Psoas muscle (tissue), 8 donors: ENCODE measurements at regions of chr7 and their contacts with region 1.

Region 1: GRCh38 chr7:138161600-138162081 is 85.4 kb downstream of the AKR1D1 start:
- DNase-seq: peak in 1 of 2 donors; percentile 38
- ATAC-seq: peak in 1 of 4 donors; percentile 46
- H3K4me3 ChIP-seq: no peak overlapping the region
- H3K27ac ChIP-seq: no peak overlapping the region
- H3K4me1 ChIP-seq: no peaks in the 10 kb centered on the region
- H3K27me3 ChIP-seq: peaks cover 0 to under 1% (median 0%) of the 10 kb centered on the region in 3 donors
- CTCF ChIP-seq: peak; percentile 46

Region 2: DNA sequence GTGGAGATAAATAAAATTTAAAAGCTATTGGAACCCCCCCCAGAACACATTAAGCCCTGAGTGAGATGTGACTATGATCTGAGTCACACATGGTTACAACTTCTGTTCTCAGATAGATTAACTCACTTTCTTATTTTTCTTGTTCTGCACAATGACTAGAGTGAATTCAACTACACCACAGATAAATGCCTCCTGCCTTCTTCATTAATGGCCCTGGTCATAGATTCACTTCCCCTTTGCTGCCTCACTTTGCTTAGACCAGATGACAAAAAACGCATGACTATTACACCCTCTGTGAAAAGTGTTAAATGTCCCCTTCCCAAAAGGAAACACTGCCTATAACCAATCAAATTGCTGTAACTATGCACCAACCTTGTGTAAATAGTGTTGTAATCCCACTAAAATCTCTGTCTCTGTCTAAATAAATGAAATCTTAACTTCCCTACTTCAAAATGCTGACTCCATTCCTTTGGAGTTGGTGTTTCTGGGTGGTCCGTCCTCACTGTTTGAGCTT is 36.0 kb before region 1 on chr7:
- intact Hi-C with region 1: no loop called
- DNase-seq: no peak
- ATAC-seq: no peak
- H3K4me3 ChIP-seq: no peak overlapping the region
- H3K27ac ChIP-seq: no peak overlapping the region
- H3K4me1 ChIP-seq: no peaks in the 10 kb centered on the region
- H3K27me3 ChIP-seq: peaks cover 0 to 2% (median 0%) of the 10 kb centered on the region in 3 donors
- CTCF ChIP-seq: no peak

Region 3: GRCh38 chr7:138478499-138478908 is 316.9 kb after region 1 on chr7:
- intact Hi-C with region 1: no loop called
- DNase-seq: no peak
- ATAC-seq: no peak
- H3K4me3 ChIP-seq: no peak overlapping the region
- H3K27ac ChIP-seq: no peak overlapping the region
- H3K4me1 ChIP-seq: peaks cover under 1% of the 10 kb centered on the region
- H3K27me3 ChIP-seq: no peaks in the 10 kb centered on the region
- CTCF ChIP-seq: no peak

Region 4: DNA sequence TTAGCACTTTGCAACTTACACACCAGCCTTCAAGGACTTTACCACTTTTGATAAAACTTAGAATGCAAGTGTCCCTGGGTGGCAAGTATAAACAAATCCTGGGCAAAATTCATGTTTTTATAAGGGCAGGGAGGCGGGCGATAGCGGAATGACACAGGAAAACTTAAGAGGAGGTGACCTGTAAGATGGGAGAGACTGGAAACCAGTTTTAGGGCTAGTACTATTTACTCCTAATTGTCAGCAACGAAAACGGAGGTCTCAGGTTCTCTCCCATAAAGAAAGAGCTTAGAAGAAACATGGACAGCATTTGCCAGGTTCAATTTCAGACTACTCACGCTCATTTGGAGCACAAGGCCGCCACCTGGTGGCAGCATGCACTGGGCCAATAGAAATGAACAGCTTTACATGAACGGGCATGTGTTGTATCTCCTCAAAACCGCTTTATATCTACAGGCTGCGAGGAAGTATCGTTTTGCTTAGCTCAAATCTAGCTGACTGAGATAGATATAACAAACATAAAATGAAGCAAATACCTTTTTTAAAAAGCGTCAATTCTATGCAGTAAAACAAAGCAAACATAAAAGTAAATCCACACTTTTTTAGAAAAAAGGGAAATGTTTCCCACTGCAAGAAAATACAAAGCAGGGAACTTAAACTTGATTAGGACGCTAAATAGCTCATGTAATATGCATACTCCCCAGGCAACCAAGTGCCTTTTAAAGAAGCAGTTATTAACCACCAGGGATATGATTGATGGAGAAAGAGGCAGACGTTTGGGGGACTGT is 577.1 kb after region 1 on chr7:
- intact Hi-C with region 1: loop called (anchors 2 to 10 kb)
- DNase-seq: peak; percentile 74 to 83
- ATAC-seq: peak; percentile 56 to 81 (median 69)
- H3K4me3 ChIP-seq: no peak overlapping the region
- H3K27ac ChIP-seq: no peak overlapping the region
- H3K4me1 ChIP-seq: no peaks in the 10 kb centered on the region
- H3K27me3 ChIP-seq: no peaks in the 10 kb centered on the region
- CTCF ChIP-seq: peak; percentile 87

Region 5: GRCh38 chr7:138746073-138746472 is 584.4 kb after region 1 on chr7:
- intact Hi-C with region 1: loop called in 1 of 2 experiments (anchors 10 kb)
- DNase-seq: no peak
- ATAC-seq: no peak
- H3K4me3 ChIP-seq: no peak overlapping the region
- H3K27ac ChIP-seq: no peak overlapping the region
- H3K4me1 ChIP-seq: no peaks in the 10 kb centered on the region
- H3K27me3 ChIP-seq: peaks cover 0 to 2% (median 0%) of the 10 kb centered on the region in 3 donors
- CTCF ChIP-seq: no peak